ENCODE measurements at regions of chr20 and their contacts with region 1.

Region 1: GRCh38 chr20:14741616-14742015 is 404.2 kb upstream of the FLRT3 start:
- DNase-seq: no peak
- ATAC-seq: no peak
- H3K4me3 ChIP-seq: no peak overlapping the region
- H3K27ac ChIP-seq: no peak overlapping the region
- H3K4me1 ChIP-seq: peaks cover 12% of the 10 kb centered on the region
- H3K27me3 ChIP-seq: no peaks in the 10 kb centered on the region
- CTCF ChIP-seq: no peak

Region 2: DNA sequence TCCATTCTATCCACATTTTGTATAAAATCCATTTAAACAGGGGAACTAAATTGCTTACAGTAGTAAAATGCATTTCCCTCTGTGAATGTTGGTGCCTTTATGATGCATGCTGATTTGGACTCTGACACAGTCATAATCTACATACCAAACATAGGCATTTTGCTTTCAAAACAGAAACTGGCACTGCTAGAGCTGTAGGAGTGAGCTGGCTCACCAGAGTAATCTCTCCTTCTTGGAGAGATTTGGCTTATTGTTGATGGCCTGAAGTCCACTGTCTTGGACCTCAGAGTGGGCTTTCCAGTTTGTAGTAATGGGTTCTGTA is 41.0 kb before region 1 on chr20:
- intact Hi-C with region 1: no loop called
- DNase-seq: no peak
- ATAC-seq: peak in 1 of 4 donors; percentile 51
- H3K4me3 ChIP-seq: no peak overlapping the region
- H3K27ac ChIP-seq: no peak overlapping the region
- H3K4me1 ChIP-seq: no peaks in the 10 kb centered on the region
- H3K27me3 ChIP-seq: no peaks in the 10 kb centered on the region
- CTCF ChIP-seq: no peak

Region 3: DNA sequence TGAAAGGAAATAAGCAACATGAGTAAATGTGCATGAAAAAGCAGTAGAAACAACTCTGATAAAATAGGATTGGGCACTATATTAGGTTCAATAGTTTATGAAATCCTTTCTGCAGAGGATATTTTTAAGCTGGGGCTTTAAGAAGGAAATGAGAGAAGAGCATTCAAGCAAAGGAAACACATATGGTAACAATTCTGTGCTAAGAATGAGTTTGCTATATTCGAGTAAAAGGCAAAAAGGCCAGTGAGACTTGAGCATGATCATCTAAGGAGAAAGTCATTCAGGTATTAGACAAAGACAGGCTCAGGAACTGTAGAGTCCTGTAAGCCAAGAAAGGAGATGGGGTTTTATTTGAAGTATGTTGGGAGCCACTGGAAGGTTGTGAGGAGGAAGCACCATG is 17.1 kb before region 1 on chr20:
- intact Hi-C with region 1: no loop called
- DNase-seq: no peak
- ATAC-seq: no peak
- H3K4me3 ChIP-seq: no peak overlapping the region
- H3K27ac ChIP-seq: no peak overlapping the region
- H3K4me1 ChIP-seq: peaks cover 3% of the 10 kb centered on the region
- H3K27me3 ChIP-seq: no peaks in the 10 kb centered on the region
- CTCF ChIP-seq: no peak

Region 4: GRCh38 chr20:14820771-14821170 is 79.2 kb after region 1 on chr20:
- intact Hi-C with region 1: loop called in 1 of 2 experiments (anchors 2 kb)
- DNase-seq: no peak
- ATAC-seq: no peak
- H3K4me3 ChIP-seq: no peak overlapping the region
- H3K27ac ChIP-seq: no peak overlapping the region
- H3K4me1 ChIP-seq: no peaks in the 10 kb centered on the region
- H3K27me3 ChIP-seq: no peaks in the 10 kb centered on the region
- CTCF ChIP-seq: no peak